Activated CD8-positive, alpha-beta T cell treated with anti-CD3 and anti-CD28 coated beads for 36 hours (primary cell): ENCODE measurements at regions of chr11 and their contacts with region 1.

Region 1: DNA sequence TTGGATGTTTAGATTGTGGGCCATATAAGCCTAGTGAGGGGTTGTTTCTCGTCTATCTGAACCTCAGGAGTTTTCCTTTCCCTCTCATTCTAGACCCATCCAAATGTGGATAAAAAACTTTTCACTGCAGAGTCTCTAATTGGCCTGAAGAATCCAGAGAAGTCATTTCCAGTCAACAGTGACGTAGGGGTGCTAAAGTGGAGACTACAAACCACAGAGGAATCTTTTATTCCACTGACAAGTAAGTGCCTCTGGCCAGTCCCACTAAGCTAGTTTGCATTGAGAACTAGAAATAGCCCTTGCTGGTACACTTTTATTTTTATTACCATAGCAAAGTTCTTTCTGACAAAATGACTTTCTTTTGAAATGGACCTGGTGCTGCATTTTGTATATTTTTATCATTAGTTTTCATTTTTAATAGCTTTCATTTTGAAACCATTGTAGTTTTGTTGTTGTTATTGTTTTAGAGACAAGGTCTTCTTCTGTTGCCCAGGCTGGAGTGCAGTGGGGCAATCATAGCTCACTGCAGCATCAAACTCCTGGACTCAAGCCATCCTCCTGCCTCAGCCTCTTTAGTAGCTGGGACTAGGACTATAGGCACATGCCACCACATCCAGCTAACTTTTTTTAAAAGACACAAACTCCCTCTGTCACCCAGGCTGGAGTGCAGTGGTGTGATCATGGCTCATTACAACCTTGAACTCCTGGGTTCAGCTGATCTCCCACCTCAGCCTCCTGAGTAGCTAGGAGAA is 14.6 kb upstream of the PHLDB1 start:
- DNase-seq: no peak
- ATAC-seq: no peak
- H3K4me3 Mint-ChIP-seq: no peak overlapping the region
- H3K27ac Mint-ChIP-seq: no peak overlapping the region
- H3K4me1 Mint-ChIP-seq: peaks cover 18% of the 10 kb centered on the region
- H3K27me3 Mint-ChIP-seq: no peaks in the 10 kb centered on the region
- CTCF ChIP-seq: no peak

Region 2: GRCh38 chr11:118240999-118241768 is 351.6 kb before region 1 on chr11:
- CTCF ChIA-PET with region 1: no interaction called
- POLR2A ChIA-PET with region 1: no interaction called
- intact Hi-C with region 1: no loop called
- DNase-seq: peak; percentile 85
- ATAC-seq: peak; percentile 82
- H3K4me3 Mint-ChIP-seq: peak overlapping the region; percentile 86
- H3K27ac Mint-ChIP-seq: peak overlapping the region; percentile 97
- H3K4me1 Mint-ChIP-seq: peaks cover 78% of the 10 kb centered on the region
- H3K27me3 Mint-ChIP-seq: no peaks in the 10 kb centered on the region
- CTCF ChIP-seq: no peak

Region 3: GRCh38 chr11:118572061-118572980 is 20.5 kb before region 1 on chr11 and contains the start of gene ARCN1:
- CTCF ChIA-PET with region 1: interaction called, 15 read pairs
- POLR2A ChIA-PET with region 1: interaction called, 4 read pairs
- intact Hi-C with region 1: no loop called
- DNase-seq: peak; percentile 83
- ATAC-seq: peak; percentile 84
- H3K4me3 Mint-ChIP-seq: peak within 1 kb of the TSS; percentile 84
- H3K27ac Mint-ChIP-seq: peak within 1 kb of the TSS; percentile 93
- H3K4me1 Mint-ChIP-seq: peaks cover 48% of the 10 kb centered on the region
- H3K27me3 Mint-ChIP-seq: no peaks in the 10 kb centered on the region
- CTCF ChIP-seq: no peak
- total RNA-seq, gene ARCN1: 134 to 135 TPM

Region 4: GRCh38 chr11:118581057-118581456 is 11.7 kb before region 1 on chr11:
- CTCF ChIA-PET with region 1: interaction called, 14 read pairs
- POLR2A ChIA-PET with region 1: interaction called, 5 read pairs
- intact Hi-C with region 1: no loop called
- DNase-seq: no peak
- ATAC-seq: no peak
- H3K4me3 Mint-ChIP-seq: no peak overlapping the region
- H3K27ac Mint-ChIP-seq: no peak overlapping the region
- H3K4me1 Mint-ChIP-seq: peaks cover 31% of the 10 kb centered on the region
- H3K27me3 Mint-ChIP-seq: no peaks in the 10 kb centered on the region
- CTCF ChIP-seq: no peak

Region 5: GRCh38 chr11:118610804-118611795 is 18.3 kb after region 1 on chr11:
- CTCF ChIA-PET with region 1: interaction called, 177 read pairs
- POLR2A ChIA-PET with region 1: interaction called, 5 read pairs
- intact Hi-C with region 1: no loop called
- DNase-seq: peak; percentile 93
- ATAC-seq: peak; percentile 67
- H3K4me3 Mint-ChIP-seq: peak overlapping the region; percentile 73
- H3K27ac Mint-ChIP-seq: no peak overlapping the region
- H3K4me1 Mint-ChIP-seq: peaks cover 20% of the 10 kb centered on the region
- H3K27me3 Mint-ChIP-seq: peaks cover 12% of the 10 kb centered on the region
- CTCF ChIP-seq: peak; percentile 95

Region 6: GRCh38 chr11:118659314-118659952 is 66.6 kb after region 1 on chr11:
- CTCF ChIA-PET with region 1: interaction called, 15 read pairs
- POLR2A ChIA-PET with region 1: no interaction called
- intact Hi-C with region 1: no loop called
- DNase-seq: peak; percentile 97
- ATAC-seq: peak; percentile 100
- H3K4me3 Mint-ChIP-seq: no peak overlapping the region
- H3K27ac Mint-ChIP-seq: no peak overlapping the region
- H3K4me1 Mint-ChIP-seq: no peaks in the 10 kb centered on the region
- H3K27me3 Mint-ChIP-seq: no peaks in the 10 kb centered on the region
- CTCF ChIP-seq: peak; percentile 99